Gastrocnemius medialis (tissue), 4 donors: ENCODE measurements at regions of chr1 and their contacts with region 1.

Region 1: DNA sequence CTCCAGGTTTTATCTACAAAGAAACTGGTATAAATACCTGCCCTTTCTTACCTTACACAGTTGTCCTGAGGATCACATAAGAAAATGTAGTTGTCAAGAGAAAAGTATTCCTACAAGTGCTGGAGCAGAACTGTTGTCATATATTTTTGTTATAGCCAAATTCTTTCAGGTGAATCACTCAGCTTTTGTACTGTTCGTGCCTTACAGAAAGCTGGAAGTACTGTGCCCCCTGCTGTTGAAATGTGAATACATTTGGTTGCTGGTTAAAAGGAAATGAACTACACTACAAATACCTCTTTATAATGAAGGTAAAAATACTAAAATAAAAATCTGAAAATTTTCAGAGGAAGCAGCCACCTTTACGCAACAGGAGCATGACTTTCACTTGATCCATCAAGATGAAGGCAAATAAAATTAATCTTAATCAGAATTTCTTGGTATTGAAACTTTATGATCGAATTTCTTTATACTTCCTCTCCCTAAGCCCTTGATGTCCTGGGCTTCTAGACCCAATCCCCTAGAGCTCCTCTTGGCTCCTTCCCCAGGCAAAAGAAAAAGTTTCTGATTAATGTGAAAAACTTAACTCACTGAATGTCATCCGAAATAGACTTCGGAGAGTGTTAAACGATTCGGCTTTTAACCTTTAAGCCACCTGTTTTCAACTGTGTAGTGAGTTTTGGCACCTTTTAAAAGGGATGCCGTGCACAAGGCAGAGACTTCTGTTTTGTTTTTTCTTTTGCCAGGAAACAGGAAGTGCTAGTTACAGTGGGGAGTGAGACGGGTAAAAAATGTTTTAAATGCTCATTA is 12.5 kb downstream of the CHML start:
- DNase-seq: no peak
- ATAC-seq: no peak
- H3K4me3 ChIP-seq: no peak overlapping the region
- H3K27ac ChIP-seq: no peak overlapping the region
- H3K4me1 ChIP-seq: peaks cover 5% of the 10 kb centered on the region in 2 donors
- H3K27me3 ChIP-seq: no peaks in the 10 kb centered on the region
- CTCF ChIP-seq: peak in 4 of 5 experiments; percentile 8 to 41 (median 29)
- POLR2A ChIP-seq: no peak

Region 2: GRCh38 chr1:241531195-241532161 is 96.2 kb before region 1 on chr1:
- in situ Hi-C with region 1: loop called in 3 of 4 experiments (anchors 5 to 10 kb)
- intact Hi-C with region 1: no loop called
- DNase-seq: no peak
- ATAC-seq: peak; percentile 69 to 91
- H3K4me3 ChIP-seq: peak overlapping the region; percentile 55 to 59 (median 58)
- H3K27ac ChIP-seq: peak overlapping the region in 2 of 4 donors; percentile 1 to 6
- H3K4me1 ChIP-seq: peaks cover 0 to 4% of the 10 kb centered on the region in 2 donors
- H3K27me3 ChIP-seq: no peaks in the 10 kb centered on the region
- CTCF ChIP-seq: peak in 4 of 5 experiments; percentile 24 to 58 (median 44)
- POLR2A ChIP-seq: no peak